BJ (cell line): ENCODE measurements at regions of chr19 and their contacts with region 1.

Region 1: GRCh38 chr19:8487137-8487851 is 15.1 kb downstream of the PRAM1 start:
- DNase-seq: no peak
- H3K4me3 ChIP-seq: no peak overlapping the region
- H3K27me3 ChIP-seq: no peaks in the 10 kb centered on the region
- CTCF ChIP-seq: no peak

Region 2: DNA sequence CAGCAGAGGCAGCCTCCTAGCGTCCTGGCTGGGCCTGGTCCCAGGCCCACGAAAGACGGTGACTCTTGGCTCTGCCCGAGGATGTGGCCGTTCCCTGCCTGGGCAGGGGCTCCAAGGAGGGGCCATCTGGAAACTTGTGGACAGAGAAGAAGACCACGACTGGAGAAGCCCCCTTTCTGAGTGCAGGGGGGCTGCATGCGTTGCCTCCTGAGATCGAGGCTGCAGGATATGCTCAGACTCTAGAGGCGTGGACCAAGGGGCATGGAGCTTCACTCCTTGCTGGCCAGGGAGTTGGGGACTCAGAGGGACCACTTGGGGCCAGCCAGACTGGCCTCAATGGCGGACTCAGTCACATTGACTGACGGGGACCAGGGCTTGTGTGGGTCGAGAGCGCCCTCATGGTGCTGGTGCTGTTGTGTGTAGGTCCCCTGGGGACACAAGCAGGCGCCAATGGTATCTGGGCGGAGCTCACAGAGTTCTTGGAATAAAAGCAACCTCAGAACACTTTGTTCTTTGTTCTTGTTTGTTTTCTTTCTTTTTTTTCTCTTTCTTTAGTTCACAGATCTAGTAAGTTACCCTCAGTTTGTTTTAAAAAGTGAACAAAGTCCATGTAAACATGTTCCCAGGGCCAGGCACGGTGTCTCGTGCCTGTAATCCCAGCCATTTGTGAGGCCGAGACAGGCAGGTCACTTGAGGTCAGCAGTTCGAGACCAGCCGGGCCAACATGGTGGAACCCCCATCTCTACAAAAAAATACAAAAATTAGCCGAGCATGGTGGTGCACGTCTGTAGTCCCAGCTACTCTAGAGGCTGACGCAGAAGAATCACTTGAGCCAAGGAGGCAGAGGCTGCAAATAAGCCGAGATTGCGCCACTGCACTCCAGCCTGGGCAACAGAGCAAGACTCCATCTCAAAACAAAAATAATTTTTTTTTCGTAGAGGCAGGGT is 113.2 kb before region 1 on chr19:
- CTCF ChIA-PET with region 1: no interaction called
- POLR2A ChIA-PET with region 1: no interaction called
- DNase-seq: no peak
- H3K4me3 ChIP-seq: no peak overlapping the region
- H3K27me3 ChIP-seq: no peaks in the 10 kb centered on the region
- CTCF ChIP-seq: no peak

Region 3: GRCh38 chr19:8444645-8445487 is 42.4 kb before region 1 on chr19 and contains the start of gene HNRNPM:
- CTCF ChIA-PET with region 1: no interaction called
- POLR2A ChIA-PET with region 1: no interaction called
- DNase-seq: peak; percentile 84
- H3K4me3 ChIP-seq: peak within 1 kb of the TSS; percentile 99
- H3K27me3 ChIP-seq: no peaks in the 10 kb centered on the region
- CTCF ChIP-seq: no peak
- polyA plus RNA-seq, gene HNRNPM: 60.2 and 81.6 TPM in 2 replicates

Region 4: GRCh38 chr19:8476524-8476923 is 10.8 kb before region 1 on chr19:
- CTCF ChIA-PET with region 1: interaction called, 10 read pairs
- POLR2A ChIA-PET with region 1: no interaction called
- DNase-seq: no peak
- H3K4me3 ChIP-seq: no peak overlapping the region
- H3K27me3 ChIP-seq: no peaks in the 10 kb centered on the region
- CTCF ChIP-seq: no peak

Region 5: GRCh38 chr19:8519388-8519787 is 32.1 kb after region 1 on chr19:
- CTCF ChIA-PET with region 1: no interaction called
- POLR2A ChIA-PET with region 1: no interaction called
- DNase-seq: no peak
- H3K4me3 ChIP-seq: no peak overlapping the region
- H3K27me3 ChIP-seq: no peaks in the 10 kb centered on the region
- CTCF ChIP-seq: no peak